ENCODE measurements at regions of chr19 and their contacts with region 1.

Region 1: DNA sequence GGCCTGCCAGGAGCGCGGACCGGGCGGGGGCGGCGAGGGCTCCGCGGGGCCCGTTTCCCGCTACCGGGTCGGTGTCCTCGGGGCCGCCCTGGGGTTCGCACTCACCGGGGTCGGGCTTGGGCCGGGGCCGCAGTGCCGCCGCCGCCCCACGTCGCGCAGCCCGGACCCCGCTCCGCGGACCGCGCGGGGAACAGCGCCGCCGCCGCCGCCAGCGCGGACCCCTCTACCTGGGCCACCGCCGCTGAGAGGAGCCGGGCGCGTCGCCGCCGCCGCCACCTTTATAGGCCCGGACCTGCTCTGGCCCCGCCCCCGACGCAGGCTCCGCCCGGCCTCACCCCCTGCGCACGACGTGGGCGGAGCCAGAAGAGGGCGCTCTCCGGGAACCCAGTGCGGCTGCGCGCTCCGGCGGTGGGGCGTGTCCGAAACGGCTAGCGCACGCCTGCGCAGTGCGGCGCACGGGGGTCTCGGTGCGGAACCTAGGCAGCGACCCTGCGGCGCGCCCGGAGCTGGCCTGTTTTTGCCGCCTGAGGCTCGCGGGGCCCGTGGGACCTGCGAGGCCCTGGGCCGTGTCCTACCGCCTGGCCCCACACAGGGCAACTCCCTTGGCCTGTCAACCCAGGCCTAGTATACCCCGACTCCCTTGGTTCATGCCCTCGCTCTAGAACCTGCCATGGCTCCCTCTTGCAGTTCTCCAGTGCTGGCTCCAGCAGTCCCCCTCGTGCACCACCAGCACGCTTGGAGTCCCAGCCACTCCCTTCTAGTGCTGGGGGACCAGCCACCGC is at the start of gene MKNK2:
- DNase-seq: peak; percentile 88 to 98 (median 95)
- ATAC-seq: peak; percentile 81
- H3K4me3 ChIP-seq: peak within 1 kb of the TSS; percentile 99
- H3K4me3 Mint-ChIP-seq: peak within 1 kb of the TSS; percentile 94
- H3K27ac ChIP-seq: peak within 1 kb of the TSS; percentile 83 to 87
- H3K27ac Mint-ChIP-seq: peak within 1 kb of the TSS; percentile 93
- H3K4me1 ChIP-seq: peaks cover 78% of the 10 kb centered on the region
- H3K4me1 Mint-ChIP-seq: peaks cover 37% of the 10 kb centered on the region
- H3K27me3 ChIP-seq: no peaks in the 10 kb centered on the region
- H3K27me3 Mint-ChIP-seq: no peaks in the 10 kb centered on the region
- CTCF ChIP-seq: peak; percentile 32
- total RNA-seq, gene MKNK2: 325 to 347 TPM

Region 2: GRCh38 chr19:2032296-2032941 is 18.8 kb before region 1 on chr19:
- CTCF ChIA-PET with region 1: no interaction called
- POLR2A ChIA-PET with region 1: interaction called, 12 read pairs
- intact Hi-C with region 1: no loop called
- DNase-seq: peak in 8 of 14 experiments; percentile 39 to 83 (median 60)
- ATAC-seq: no peak
- H3K4me3 ChIP-seq: peak overlapping the region; percentile 17
- H3K4me3 Mint-ChIP-seq: peak overlapping the region; percentile 63
- H3K27ac ChIP-seq: peak overlapping the region; percentile 14 to 60
- H3K27ac Mint-ChIP-seq: peak overlapping the region; percentile 90
- H3K4me1 ChIP-seq: peaks cover 41% of the 10 kb centered on the region
- H3K4me1 Mint-ChIP-seq: peaks cover 33% of the 10 kb centered on the region
- H3K27me3 ChIP-seq: no peaks in the 10 kb centered on the region
- H3K27me3 Mint-ChIP-seq: no peaks in the 10 kb centered on the region
- CTCF ChIP-seq: no peak

Region 3: DNA sequence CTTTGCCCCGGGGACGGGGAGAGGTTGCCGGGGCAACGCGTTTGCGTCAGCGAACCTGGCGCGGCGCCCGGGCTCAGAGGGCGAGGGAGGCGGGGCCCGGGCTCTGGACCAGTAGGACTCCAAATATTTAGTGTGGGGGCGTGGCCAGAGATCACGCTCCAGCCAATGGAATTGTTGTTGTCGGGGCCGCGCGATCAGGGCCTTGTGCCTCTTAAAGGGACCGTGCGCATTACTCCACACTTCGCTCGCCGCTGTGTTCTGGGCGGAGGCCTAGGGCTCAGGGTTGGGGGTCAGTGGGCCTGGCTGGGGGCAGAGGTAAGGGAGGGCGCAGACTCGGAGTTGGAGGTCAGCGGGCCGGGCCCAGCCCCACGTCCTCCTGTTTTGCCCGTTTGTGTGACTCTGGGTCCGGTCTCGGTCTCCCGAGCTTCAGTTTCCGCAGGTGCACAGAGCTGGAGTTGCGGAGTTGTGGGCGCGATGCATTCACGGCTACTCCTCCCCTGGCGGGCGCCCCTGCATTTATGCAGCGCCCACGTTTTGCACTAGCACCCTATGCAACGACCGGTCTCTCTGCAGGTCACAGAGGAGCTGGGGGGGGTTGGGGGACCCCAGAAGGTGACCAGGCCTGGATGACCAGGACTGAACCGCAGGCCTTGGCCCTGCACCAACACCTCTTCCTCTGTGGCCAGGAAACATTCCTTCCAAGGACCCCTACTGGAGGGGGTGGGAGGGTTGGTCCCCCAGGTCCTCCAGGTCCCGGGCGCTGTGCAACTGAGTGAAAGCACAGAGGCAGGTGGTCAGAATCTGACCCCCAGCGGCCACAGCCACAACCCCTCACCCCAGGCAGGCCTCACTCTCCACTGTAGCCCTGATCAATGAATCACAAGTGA is 10.6 kb after region 1 on chr19:
- CTCF ChIA-PET with region 1: interaction called, 3 read pairs
- POLR2A ChIA-PET with region 1: interaction called, 21 read pairs
- intact Hi-C with region 1: loop called (anchors 1 kb)
- DNase-seq: peak; percentile 98 to 100 (median 99)
- ATAC-seq: peak; percentile 92
- H3K4me3 ChIP-seq: peak overlapping the region; percentile 84
- H3K4me3 Mint-ChIP-seq: peak overlapping the region; percentile 92
- H3K27ac ChIP-seq: peak overlapping the region; percentile 95 to 97
- H3K27ac Mint-ChIP-seq: peak overlapping the region; percentile 98
- H3K4me1 ChIP-seq: peaks cover 69% of the 10 kb centered on the region
- H3K4me1 Mint-ChIP-seq: peaks cover 40% of the 10 kb centered on the region
- H3K27me3 ChIP-seq: no peaks in the 10 kb centered on the region
- H3K27me3 Mint-ChIP-seq: no peaks in the 10 kb centered on the region
- CTCF ChIP-seq: no peak

Region 4: DNA sequence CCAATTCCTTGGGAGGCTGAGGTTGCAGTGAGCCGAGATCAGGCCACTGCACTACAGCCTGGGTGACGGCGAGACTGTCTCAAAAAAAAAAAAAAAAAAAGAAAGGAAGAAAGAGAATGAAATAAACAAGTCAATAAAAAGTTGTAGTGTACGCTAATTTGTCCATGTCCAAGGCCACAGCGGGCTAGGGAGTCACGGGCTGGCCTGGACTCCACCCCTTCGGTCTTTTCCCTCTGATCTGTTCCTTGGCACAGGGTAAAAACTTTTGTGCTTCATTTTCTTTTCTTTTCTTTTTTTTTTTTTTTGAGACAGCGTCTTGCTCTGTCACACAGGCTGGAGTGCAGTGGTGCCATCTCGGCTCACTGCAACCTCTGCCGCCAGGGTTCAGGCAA is 19.2 kb after region 1 on chr19:
- CTCF ChIA-PET with region 1: interaction called, 16 read pairs
- POLR2A ChIA-PET with region 1: interaction called, 5 read pairs
- intact Hi-C with region 1: no loop called
- DNase-seq: no peak
- ATAC-seq: no peak
- H3K4me3 ChIP-seq: no peak overlapping the region
- H3K4me3 Mint-ChIP-seq: no peak overlapping the region
- H3K27ac ChIP-seq: no peak overlapping the region
- H3K27ac Mint-ChIP-seq: peak overlapping the region; percentile 84
- H3K4me1 ChIP-seq: peaks cover 32% of the 10 kb centered on the region
- H3K4me1 Mint-ChIP-seq: peaks cover 16% of the 10 kb centered on the region
- H3K27me3 ChIP-seq: no peaks in the 10 kb centered on the region
- H3K27me3 Mint-ChIP-seq: no peaks in the 10 kb centered on the region
- CTCF ChIP-seq: no peak

Region 5: GRCh38 chr19:2084993-2085720 is 34.0 kb after region 1 on chr19:
- CTCF ChIA-PET with region 1: interaction called, 3 read pairs
- POLR2A ChIA-PET with region 1: interaction called, 23 read pairs
- intact Hi-C with region 1: no loop called
- DNase-seq: peak; percentile 83 to 99 (median 92)
- ATAC-seq: peak; percentile 59
- H3K4me3 ChIP-seq: peak overlapping the region; percentile 99
- H3K4me3 Mint-ChIP-seq: peak overlapping the region; percentile 93
- H3K27ac ChIP-seq: peak overlapping the region; percentile 97 to 98
- H3K27ac Mint-ChIP-seq: peak overlapping the region; percentile 97
- H3K4me1 ChIP-seq: peaks cover 85% of the 10 kb centered on the region
- H3K4me1 Mint-ChIP-seq: peaks cover 75% of the 10 kb centered on the region
- H3K27me3 ChIP-seq: no peaks in the 10 kb centered on the region
- H3K27me3 Mint-ChIP-seq: no peaks in the 10 kb centered on the region
- CTCF ChIP-seq: no peak

Measured in CD4-positive, alpha-beta T cell (primary cell).